ENCODE measurements at regions of chr11 and their contacts with region 1.

Region 1: GRCh38 chr11:35165423-35166368 is 26.7 kb downstream of the CD44 start:
- DNase-seq: no peak
- ATAC-seq: peak; percentile 27
- H3K4me3 ChIP-seq: peak overlapping the region; percentile 2 to 29; a peak in 3 of 4 replicates
- H3K27ac ChIP-seq: peak overlapping the region; percentile 89
- H3K4me1 ChIP-seq: peaks cover 94 to 100% of the 10 kb centered on the region in 2 experiments
- H3K27me3 ChIP-seq: no peaks in the 10 kb centered on the region
- CTCF ChIP-seq: no peak
- POLR2A ChIP-seq: no peak
- RAD21 ChIP-seq: no peak

Region 2: DNA sequence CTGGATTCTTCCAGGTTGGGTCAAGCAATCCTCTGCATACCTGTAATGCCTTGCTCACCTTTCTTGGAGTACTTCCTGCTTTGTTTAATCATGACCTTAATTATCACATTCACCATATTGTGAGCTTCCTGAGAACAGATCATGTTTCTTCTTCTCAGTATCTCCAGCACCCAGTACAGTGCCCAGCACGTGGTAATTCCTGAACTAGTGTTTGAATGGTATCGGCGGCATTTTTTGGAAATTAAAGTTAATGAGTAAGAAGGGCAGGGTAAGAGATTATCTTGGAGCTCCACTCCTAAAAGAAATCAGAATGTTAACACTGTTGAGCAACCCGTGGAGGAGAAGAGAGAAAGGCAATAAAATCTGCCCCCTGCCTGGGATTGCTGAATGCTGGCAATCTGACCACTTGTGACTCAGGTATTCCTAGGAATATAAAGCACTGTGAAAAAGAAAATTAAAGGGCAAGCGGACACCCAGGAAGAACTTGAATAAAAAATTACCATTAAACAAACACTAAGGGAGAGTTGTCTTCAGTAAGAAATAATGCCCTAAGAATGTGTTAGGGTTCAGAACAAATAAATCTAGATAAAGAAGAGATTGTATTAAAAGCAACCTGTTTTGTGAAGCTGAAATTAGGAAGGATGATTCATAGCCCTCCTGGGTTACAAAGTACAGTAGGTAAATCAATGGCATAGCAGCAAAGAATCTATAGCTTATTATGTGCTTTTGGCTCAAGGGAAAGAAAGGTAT is 156.3 kb before region 1 on chr11:
- CTCF ChIA-PET with region 1: no interaction called
- POLR2A ChIA-PET with region 1: interaction called, 6 read pairs
- RAD21 ChIA-PET with region 1: interaction called in 1 of 2 experiments, 7 read pairs
- intact Hi-C with region 1: loop called (anchors 1 kb)
- DNase-seq: peak; percentile 96
- ATAC-seq: peak; percentile 78
- H3K4me3 ChIP-seq: peak overlapping the region in 1 of 2 experiments; percentile 21; a peak in 2 of 4 replicates
- H3K27ac ChIP-seq: peak overlapping the region; percentile 99
- H3K4me1 ChIP-seq: peaks cover 90 to 92% of the 10 kb centered on the region in 2 experiments
- H3K27me3 ChIP-seq: no peaks in the 10 kb centered on the region
- CTCF ChIP-seq: peak in 1 of 3 experiments; percentile 9; a peak in 1 of 6 replicates
- POLR2A ChIP-seq: no peak
- RAD21 ChIP-seq: peak; percentile 56

Region 3: DNA sequence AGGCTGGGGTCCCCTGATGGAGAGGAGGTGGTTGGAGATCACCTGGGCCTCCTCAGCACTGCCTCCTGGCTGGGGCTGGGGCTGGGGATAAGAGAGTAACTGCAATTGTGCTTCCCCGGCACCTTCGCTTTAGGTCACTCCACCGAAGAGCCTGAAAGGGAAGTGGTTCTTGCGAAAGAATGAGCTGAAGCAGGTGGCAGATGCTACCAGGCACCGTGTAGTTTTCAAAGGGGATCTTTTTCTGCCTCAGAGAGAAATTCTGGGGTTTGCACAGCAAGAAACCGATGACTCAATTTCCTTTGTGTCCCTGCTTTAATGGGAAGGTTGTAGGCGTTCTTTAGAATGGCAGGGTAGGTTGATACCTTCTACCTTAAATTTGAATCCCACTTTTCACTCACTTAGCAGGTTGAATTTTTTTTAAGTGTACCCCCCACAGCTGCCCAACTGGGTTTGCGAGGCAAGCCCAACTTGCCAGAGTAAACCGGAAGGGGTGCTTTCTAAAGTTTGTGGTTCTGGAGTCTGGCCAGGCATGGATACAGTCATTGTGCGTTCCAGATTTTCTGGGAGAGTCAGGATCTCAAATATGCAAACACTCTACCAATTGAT is 21.5 kb before region 1 on chr11:
- CTCF ChIA-PET with region 1: interaction called, 4 read pairs
- POLR2A ChIA-PET with region 1: interaction called, 10 read pairs
- RAD21 ChIA-PET with region 1: interaction called in 1 of 2 experiments, 3 read pairs
- intact Hi-C with region 1: no loop called
- DNase-seq: no peak
- ATAC-seq: peak; percentile 44
- H3K4me3 ChIP-seq: peak overlapping the region; percentile 19 to 44; a peak in 3 of 4 replicates
- H3K27ac ChIP-seq: peak overlapping the region; percentile 97
- H3K4me1 ChIP-seq: peaks cover 68 to 90% of the 10 kb centered on the region in 2 experiments
- H3K27me3 ChIP-seq: no peaks in the 10 kb centered on the region
- CTCF ChIP-seq: no peak
- POLR2A ChIP-seq: no peak
- RAD21 ChIP-seq: no peak

Measured in HCT116 (cell line).